ENCODE measurements at regions of chr15 and their contacts with region 1.

Region 1: GRCh38 chr15:39553947-39554693 is 26.8 kb upstream of the THBS1 start:
- DNase-seq: peak; percentile 26
- ATAC-seq: peak; percentile 74
- H3K4me3 ChIP-seq: no peak overlapping the region
- H3K27ac ChIP-seq: no peak overlapping the region; the same call in 1 of the 2 replicates
- H3K4me1 ChIP-seq: peaks cover 20% of the 10 kb centered on the region
- H3K27me3 ChIP-seq: no peaks in the 10 kb centered on the region
- CTCF ChIP-seq: no peak
- EP300 ChIP-seq: peak in 1 of 2 experiments; percentile 52; a peak in 1 of 4 replicates
- POLR2A ChIP-seq: no peak
- RAD21 ChIP-seq: no peak

Region 2: DNA sequence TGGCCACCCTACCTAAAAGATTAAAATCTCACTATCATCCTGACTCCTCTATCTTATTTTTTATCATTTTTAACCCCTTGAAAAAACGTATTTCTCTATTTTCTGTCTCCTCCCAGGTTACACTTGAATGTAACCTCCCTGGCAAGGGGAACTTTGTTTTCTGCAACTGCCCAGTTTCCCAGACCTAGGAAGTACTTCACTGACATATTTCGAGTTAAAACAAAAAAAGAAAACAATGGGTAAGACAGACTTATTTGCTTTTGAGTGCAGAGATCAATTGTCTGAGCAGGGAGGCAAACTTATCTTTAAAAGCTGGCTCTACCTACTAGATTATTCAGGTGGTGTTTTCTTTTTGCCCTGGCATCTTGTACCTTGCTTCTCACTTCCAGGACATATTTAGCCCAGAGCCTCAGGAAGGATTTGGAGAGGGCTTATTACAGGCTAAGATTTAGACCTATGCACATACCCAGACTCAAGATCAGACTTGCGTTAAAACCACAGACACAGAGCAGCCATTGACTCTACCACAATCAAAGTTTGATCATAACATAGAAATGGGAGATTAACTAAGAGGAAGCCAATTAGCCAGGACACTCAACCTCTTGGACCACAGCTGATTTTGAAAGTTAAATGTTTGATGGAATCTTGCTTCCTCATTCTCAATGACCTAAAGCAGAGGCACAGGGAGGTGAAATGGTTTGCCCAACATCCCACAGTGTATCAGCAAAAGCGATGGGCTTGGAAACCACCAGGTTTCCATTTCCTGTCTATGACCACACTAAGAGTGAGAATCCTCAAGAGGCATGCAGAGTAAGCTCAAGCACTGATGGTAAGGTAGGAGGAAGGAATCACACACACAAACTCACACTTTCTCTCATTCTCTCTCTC is 142.8 kb before region 1 on chr15:
- CTCF ChIA-PET with region 1: no interaction called
- POLR2A ChIA-PET with region 1: no interaction called
- RAD21 ChIA-PET with region 1: no interaction called
- SMC1A ChIA-PET with region 1: no interaction called
- in situ Hi-C with region 1: no loop called
- intact Hi-C with region 1: loop called (anchors 5 kb)
- DNase-seq: peak; percentile 78
- ATAC-seq: peak; percentile 97
- H3K4me3 ChIP-seq: no peak overlapping the region
- H3K27ac ChIP-seq: no peak overlapping the region
- H3K4me1 ChIP-seq: peaks cover 21% of the 10 kb centered on the region
- H3K27me3 ChIP-seq: no peaks in the 10 kb centered on the region
- CTCF ChIP-seq: no peak
- EP300 ChIP-seq: peak; percentile 58 to 63; a peak in 2 of 4 replicates
- POLR2A ChIP-seq: no peak
- RAD21 ChIP-seq: no peak

Region 3: DNA sequence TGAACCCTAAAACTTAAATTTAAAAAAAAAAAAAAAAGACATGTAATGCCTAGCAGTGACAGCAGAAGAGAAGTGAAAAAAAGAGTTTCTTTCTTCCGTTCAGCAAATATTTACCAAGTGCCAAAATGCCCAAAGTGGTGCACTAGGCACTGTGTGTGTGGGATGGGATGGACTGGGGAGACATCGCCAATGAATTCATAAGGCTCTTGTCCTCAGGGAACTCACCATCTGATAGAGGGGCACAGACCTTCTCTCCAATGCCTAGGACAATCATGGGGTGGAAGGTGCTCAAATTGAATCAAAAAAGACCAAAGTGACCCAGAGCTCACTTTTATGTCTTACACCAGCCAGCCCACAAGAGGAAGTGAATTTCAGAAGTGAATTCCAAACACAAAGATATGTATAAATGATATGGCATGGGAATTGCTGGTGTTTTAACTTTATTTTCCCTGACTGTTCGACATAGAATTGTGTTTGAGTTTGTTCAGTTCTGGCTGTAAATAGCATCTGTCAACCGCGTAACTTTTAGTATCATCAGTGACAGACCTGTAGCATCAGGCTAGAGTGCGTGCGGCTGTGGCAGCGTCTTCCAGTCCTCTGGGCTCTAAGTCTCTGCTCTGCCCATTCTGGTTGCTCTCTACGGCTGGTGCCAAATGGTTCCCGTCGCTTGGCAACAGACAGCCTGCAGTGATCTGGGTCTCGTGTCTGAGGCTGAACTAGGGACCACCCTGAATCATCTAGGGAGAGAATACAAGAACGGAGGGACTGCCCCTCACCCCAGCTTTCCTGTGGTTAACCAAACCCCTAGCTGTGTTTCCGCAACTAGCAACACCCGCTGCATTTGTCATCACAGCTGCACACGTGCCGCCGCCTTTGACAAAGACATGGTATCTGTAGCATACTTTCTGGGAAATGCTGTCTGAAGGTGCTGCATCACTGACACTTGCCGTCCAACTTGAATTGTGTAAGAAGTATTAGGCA is 127.3 kb before region 1 on chr15:
- CTCF ChIA-PET with region 1: no interaction called
- POLR2A ChIA-PET with region 1: no interaction called
- RAD21 ChIA-PET with region 1: no interaction called
- SMC1A ChIA-PET with region 1: no interaction called
- in situ Hi-C with region 1: no loop called
- intact Hi-C with region 1: loop called (anchors 5 kb)
- DNase-seq: peak; percentile 69
- ATAC-seq: peak; percentile 94
- H3K4me3 ChIP-seq: no peak overlapping the region; the same call in 1 of the 2 replicates
- H3K27ac ChIP-seq: no peak overlapping the region
- H3K4me1 ChIP-seq: peaks cover 25% of the 10 kb centered on the region
- H3K27me3 ChIP-seq: no peaks in the 10 kb centered on the region
- CTCF ChIP-seq: 0 out of 6 replicates have a peak, but pooled peaks of 1 of the 3 experiments have one; percentile 5
- EP300 ChIP-seq: peak; percentile 76 to 91; a peak in 3 of 4 replicates
- POLR2A ChIP-seq: no peak
- RAD21 ChIP-seq: no peak